Caco-2 (cell line): ENCODE measurements at regions of chr14 and their contacts with region 1.

Region 1: DNA sequence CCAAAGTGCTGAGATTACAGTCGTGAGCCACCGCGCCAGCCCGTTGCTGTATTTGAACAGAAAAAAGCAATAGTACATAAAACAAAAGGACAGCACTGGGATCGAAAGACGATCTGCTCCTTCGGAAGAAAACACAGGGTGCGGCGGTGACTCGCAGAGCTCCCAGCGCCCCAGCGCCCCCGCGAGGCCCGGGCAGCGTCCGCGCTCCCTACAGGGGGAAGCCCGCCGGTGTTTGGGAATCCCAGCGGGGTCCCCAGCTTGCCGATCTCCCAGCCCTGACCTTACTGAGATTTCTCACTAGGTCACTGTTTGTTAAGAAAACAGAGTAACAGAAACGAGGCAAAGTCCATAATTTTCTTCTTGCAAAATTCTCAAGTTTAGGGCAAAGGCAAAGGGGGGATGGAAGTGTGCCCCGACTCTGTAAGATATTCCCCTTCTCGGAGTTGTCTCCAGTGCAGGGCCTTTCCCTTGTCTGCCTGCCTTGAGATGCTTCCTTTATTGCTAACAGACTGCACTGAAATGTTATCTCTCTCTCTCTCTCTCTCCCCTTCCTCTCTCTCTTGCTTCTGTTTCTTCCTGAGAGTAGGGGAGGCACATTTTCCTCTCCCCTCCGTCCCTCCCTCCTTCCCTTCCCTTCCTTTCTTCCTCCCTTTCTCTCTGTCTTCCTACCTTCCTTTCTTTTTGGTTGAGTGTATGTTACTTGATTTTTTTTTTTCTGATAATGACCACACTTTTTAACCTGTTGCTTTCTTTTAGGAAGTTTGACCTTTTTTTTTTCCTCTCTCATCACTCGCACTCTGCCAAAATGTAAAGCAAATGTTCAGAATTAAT is 91.9 kb downstream of the TMEM30B start:
- DNase-seq: peak in 1 of 2 experiments; percentile 40
- H3K4me3 ChIP-seq: no peak overlapping the region
- H3K4me3 Mint-ChIP-seq: peak overlapping the region; percentile 1
- H3K27ac Mint-ChIP-seq: no peak overlapping the region
- H3K4me1 ChIP-seq: no peaks in the 10 kb centered on the region
- H3K4me1 Mint-ChIP-seq: peaks cover 8% of the 10 kb centered on the region
- H3K27me3 ChIP-seq: no peaks in the 10 kb centered on the region
- H3K27me3 Mint-ChIP-seq: peaks cover 5% of the 10 kb centered on the region
- CTCF ChIP-seq: peak in 1 of 2 experiments; percentile 37

Region 2: DNA sequence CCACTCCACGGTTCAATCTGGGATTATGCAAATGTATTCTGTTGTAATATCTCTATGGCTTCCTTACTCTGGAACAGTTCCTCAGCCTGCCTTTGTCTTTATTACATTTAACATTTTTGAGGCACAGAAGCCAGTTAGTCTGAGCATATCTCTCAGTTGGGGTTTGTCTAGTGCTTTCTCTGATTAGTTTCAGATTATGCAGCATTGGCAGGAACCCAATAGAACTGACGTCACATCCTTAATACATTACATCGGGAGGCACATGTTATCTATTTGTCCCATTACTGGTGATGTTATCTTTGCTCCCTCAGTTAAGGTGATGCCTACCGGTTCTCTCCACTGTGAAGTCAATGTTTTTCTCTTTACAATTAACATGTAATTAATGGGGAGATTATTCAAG is 877.8 kb before region 1 on chr14:
- CTCF ChIA-PET with region 1: no interaction called
- POLR2A ChIA-PET with region 1: no interaction called
- intact Hi-C with region 1: loop called (anchors 5 kb)
- DNase-seq: no peak
- H3K4me3 ChIP-seq: no peak overlapping the region
- H3K4me3 Mint-ChIP-seq: no peak overlapping the region
- H3K27ac Mint-ChIP-seq: no peak overlapping the region
- H3K4me1 ChIP-seq: no peaks in the 10 kb centered on the region
- H3K4me1 Mint-ChIP-seq: no peaks in the 10 kb centered on the region
- H3K27me3 ChIP-seq: no peaks in the 10 kb centered on the region
- H3K27me3 Mint-ChIP-seq: peaks cover 4% of the 10 kb centered on the region
- CTCF ChIP-seq: no peak

Region 3: GRCh38 chr14:61174987-61175386 is 14.2 kb before region 1 on chr14:
- CTCF ChIA-PET with region 1: no interaction called
- POLR2A ChIA-PET with region 1: no interaction called
- intact Hi-C with region 1: no loop called
- DNase-seq: no peak
- H3K4me3 ChIP-seq: no peak overlapping the region
- H3K4me3 Mint-ChIP-seq: no peak overlapping the region
- H3K27ac Mint-ChIP-seq: no peak overlapping the region
- H3K4me1 ChIP-seq: peaks cover 6% of the 10 kb centered on the region
- H3K4me1 Mint-ChIP-seq: peaks cover 7% of the 10 kb centered on the region
- H3K27me3 ChIP-seq: no peaks in the 10 kb centered on the region
- H3K27me3 Mint-ChIP-seq: peaks cover 4% of the 10 kb centered on the region
- CTCF ChIP-seq: no peak

Region 4: GRCh38 chr14:61252369-61253063 is 63.3 kb after region 1 on chr14:
- CTCF ChIA-PET with region 1: no interaction called
- POLR2A ChIA-PET with region 1: no interaction called
- intact Hi-C with region 1: no loop called
- DNase-seq: peak; percentile 81
- H3K4me3 ChIP-seq: no peak overlapping the region
- H3K4me3 Mint-ChIP-seq: no peak overlapping the region
- H3K27ac Mint-ChIP-seq: no peak overlapping the region
- H3K4me1 ChIP-seq: 0 out of 2 replicates have a peak, but pooled peaks cover 4% of the 10 kb centered on the region
- H3K4me1 Mint-ChIP-seq: no peaks in the 10 kb centered on the region
- H3K27me3 ChIP-seq: no peaks in the 10 kb centered on the region
- H3K27me3 Mint-ChIP-seq: peaks cover 9% of the 10 kb centered on the region
- CTCF ChIP-seq: peak; percentile 72 to 91

Region 5: GRCh38 chr14:61547186-61548086 is 358.2 kb after region 1 on chr14:
- CTCF ChIA-PET with region 1: no interaction called
- POLR2A ChIA-PET with region 1: no interaction called
- intact Hi-C with region 1: no loop called
- DNase-seq: no peak
- H3K4me3 ChIP-seq: no peak overlapping the region
- H3K4me3 Mint-ChIP-seq: no peak overlapping the region
- H3K27ac Mint-ChIP-seq: peak overlapping the region; percentile 85
- H3K4me1 ChIP-seq: peaks cover 18% of the 10 kb centered on the region
- H3K4me1 Mint-ChIP-seq: peaks cover 23% of the 10 kb centered on the region
- H3K27me3 ChIP-seq: no peaks in the 10 kb centered on the region
- H3K27me3 Mint-ChIP-seq: no peaks in the 10 kb centered on the region
- CTCF ChIP-seq: no peak